Colonic mucosa (tissue), 4 donors: ENCODE measurements at regions of chr6 and their contacts with region 1.

Region 1: DNA sequence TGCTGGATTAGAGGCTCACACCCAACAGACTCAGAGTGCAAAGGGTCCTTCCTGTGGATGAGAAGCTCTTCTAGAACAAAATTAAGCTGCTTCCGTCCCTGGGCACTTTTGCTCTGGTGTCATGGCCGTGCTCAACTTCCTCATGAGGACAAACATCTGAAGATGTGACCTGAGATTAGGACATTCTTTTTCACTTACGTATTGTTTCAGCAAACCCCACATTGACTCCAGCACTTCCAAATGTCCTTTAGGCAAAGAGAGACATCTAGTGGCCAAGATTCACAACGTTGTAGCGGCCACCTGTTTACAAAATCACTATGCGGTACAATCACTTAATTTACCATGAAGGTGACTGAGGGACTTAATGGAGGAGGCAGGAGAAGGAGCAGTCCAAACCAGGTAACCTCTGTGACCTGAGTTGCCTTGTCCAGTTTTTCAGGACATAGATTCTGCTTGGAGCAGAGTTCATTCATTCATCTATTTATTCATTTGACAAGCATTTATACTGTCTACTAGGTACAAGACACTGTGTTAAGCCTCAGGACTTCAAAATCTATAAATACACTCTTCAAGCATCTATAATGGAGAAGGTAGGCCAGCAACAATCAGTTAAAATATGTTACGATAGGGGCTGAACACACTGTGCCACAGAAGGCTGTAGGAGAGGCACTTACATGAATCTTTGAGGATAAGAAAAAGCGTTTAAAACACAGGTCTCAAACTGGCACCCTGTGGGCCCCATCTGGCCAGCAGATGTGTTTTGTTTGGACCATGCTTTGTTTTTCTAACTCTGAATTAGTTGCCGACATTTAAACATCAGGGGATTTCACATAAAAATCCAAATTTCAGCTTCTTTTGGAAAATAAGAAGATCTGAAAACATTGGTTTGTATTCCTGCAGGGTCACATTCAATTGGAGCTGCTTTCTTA is 5.6 kb upstream of the ADGRF1 start:
- DNase-seq: peak; percentile 60
- H3K4me3 ChIP-seq: no peak overlapping the region
- H3K27ac ChIP-seq: no peak overlapping the region
- H3K4me1 ChIP-seq: no peaks in the 10 kb centered on the region
- H3K27me3 ChIP-seq: no peaks in the 10 kb centered on the region
- CTCF ChIP-seq: peak; percentile 54

Region 2: DNA sequence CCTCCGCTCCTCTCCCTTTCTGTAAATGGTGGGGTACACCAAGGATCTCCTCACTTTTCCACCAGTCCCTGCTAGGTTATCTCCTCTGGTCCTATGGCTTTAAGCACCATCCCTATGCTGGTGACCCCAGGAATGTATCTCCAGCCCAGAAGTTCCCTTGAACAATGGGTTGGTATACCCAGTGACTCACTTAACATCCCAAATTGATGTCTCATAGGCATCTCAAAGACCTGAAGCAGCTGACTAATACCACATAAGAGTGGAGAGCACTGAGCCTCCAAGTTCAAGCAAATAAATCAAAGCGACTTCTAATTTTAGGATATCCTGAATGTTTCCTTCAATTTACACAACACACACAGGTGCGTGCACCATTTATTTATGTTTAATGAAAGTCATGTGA is 53.9 kb before region 1 on chr6:
- intact Hi-C with region 1: loop called (anchors 10 kb)
- DNase-seq: no peak
- H3K4me3 ChIP-seq: no peak overlapping the region
- H3K27ac ChIP-seq: no peak overlapping the region
- H3K4me1 ChIP-seq: no peaks in the 10 kb centered on the region
- H3K27me3 ChIP-seq: no peaks in the 10 kb centered on the region
- CTCF ChIP-seq: no peak